ENCODE measurements at regions of chr4 and their contacts with region 1.

Region 1: DNA sequence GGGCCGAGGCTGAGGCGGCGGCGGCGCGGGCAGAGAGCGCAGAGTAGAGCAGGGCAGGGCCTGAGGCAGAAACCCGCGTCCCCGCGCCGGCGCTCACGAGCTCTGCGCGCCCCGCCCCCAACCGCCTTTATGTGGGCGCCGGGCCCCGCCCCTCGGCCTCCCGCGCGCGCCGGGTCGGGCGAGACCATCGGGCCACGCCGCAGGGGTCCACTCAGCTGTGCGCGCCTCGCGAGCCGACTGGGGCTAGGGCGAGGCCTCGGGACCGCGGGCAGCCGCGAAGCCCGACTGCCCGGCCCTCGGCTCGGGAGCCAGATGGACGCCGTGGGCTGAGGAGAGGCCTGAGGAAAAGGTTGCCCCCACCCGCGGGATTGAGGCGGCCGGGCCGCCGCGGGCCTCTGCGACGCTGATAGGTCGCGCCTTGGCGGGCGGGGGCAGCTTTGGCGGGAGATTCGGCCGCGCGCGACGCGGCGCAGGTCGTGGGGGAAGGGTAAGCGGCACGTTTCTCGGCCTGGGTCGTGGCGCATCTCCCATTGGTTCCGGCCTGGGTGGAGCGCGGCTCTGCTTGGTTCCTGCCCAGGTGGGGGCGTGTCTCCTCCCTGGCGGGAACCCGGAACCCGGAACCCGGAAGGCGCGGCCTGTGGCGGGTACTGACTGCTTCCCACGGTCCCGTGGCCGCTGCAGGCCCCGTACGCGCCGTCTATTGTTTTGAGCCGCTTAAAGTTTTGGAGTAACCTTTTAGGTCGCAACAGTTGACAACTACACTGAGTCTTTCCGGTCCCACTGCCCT is at the start of gene SLBP:
- DNase-seq: peak; percentile 98
- H3K4me3 ChIP-seq: peak within 1 kb of the TSS; percentile 76 to 98 (median 83)
- H3K27ac ChIP-seq: peak within 1 kb of the TSS; percentile 97 to 100 (median 99)
- H3K4me1 ChIP-seq: peaks cover 0 to 52% (median 37%) of the 10 kb centered on the region in 4 donors
- H3K27me3 ChIP-seq: no peaks in the 10 kb centered on the region
- CTCF ChIP-seq: no peak
- EP300 ChIP-seq: peak in 1 of 4 donors; percentile 42
- POLR2A ChIP-seq: no peak
- total RNA-seq, gene SLBP: 32.3 to 48.9 (median 40.2) TPM

Region 2: GRCh38 chr4:1644891-1645657 is 67.3 kb before region 1 on chr4:
- intact Hi-C with region 1: no loop called
- DNase-seq: peak; percentile 95
- H3K4me3 ChIP-seq: peak overlapping the region in 2 of 4 donors; percentile 7 to 18
- H3K27ac ChIP-seq: peak overlapping the region in 3 of 4 donors; percentile 82 to 90 (median 88)
- H3K4me1 ChIP-seq: peaks cover 6 to 23% (median 17%) of the 10 kb centered on the region in 4 donors
- H3K27me3 ChIP-seq: no peaks in the 10 kb centered on the region
- CTCF ChIP-seq: no peak
- EP300 ChIP-seq: peak; percentile 44 to 62 (median 52)
- POLR2A ChIP-seq: no peak

Region 3: DNA sequence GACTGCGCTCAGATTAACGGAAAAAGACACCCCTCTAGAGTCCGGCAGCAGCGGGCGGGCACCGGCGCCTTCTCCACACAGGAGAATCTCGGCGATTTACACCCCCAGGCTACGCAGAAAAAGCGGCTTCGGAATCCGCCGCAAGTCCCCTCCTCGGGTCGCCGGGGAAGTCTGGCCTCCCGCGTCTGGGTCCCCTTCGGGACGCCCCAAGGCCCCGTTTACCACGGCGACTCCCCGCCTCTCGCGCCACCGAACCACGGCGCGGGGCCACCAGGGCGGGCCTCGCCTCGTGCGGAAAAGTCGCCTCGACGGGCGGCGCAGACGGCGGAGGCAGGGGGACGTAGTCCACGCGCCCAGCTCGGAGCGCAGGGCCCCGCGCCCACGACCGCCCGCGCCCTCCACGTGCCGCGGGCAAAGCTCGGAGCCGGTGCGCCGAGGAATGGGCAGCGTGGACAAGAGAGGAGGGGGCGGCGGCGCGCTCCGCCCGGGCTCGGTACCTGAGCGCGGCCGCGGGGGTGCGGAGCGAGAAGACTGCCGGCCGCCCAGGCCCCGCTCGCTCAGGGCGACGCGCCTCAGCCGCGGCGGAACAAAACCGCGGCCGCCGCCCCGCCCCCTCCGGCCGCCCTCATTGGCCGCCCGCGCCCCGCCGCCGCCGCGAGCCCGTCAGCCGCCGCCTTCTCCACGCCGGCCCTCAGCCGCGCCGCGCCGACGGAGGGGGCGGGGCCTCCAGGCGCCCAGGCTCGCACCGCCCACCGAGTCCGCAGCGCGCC is 28.5 kb before region 1 on chr4 and contains the start of gene FAM53A:
- intact Hi-C with region 1: loop called (anchors 2 kb)
- DNase-seq: peak; percentile 74
- H3K4me3 ChIP-seq: peak within 1 kb of the TSS; percentile 36 to 78 (median 63)
- H3K27ac ChIP-seq: peak within 1 kb of the TSS; percentile 89 to 95 (median 90)
- H3K4me1 ChIP-seq: peaks cover 0 to 20% (median 11%) of the 10 kb centered on the region in 4 donors
- H3K27me3 ChIP-seq: no peaks in the 10 kb centered on the region
- CTCF ChIP-seq: no peak
- EP300 ChIP-seq: no peak
- POLR2A ChIP-seq: no peak
- total RNA-seq, gene FAM53A: 0.82 to 4.1 (median 1.7) TPM

Region 4: GRCh38 chr4:1856042-1856788 is 143.8 kb after region 1 on chr4 and contains the start of gene LETM1:
- intact Hi-C with region 1: loop called (anchors 5 kb)
- DNase-seq: peak; percentile 98
- H3K4me3 ChIP-seq: peak within 1 kb of the TSS; percentile 70 to 90 (median 76)
- H3K27ac ChIP-seq: peak within 1 kb of the TSS; percentile 83 to 87 (median 86)
- H3K4me1 ChIP-seq: peaks cover 0 to 34% (median 29%) of the 10 kb centered on the region in 4 donors
- H3K27me3 ChIP-seq: no peaks in the 10 kb centered on the region
- CTCF ChIP-seq: peak in 1 of 4 experiments; percentile 0
- EP300 ChIP-seq: no peak
- POLR2A ChIP-seq: peak; percentile 34 to 41
- total RNA-seq, gene LETM1: 15.0 to 22.4 (median 17.8) TPM

Region 5: DNA sequence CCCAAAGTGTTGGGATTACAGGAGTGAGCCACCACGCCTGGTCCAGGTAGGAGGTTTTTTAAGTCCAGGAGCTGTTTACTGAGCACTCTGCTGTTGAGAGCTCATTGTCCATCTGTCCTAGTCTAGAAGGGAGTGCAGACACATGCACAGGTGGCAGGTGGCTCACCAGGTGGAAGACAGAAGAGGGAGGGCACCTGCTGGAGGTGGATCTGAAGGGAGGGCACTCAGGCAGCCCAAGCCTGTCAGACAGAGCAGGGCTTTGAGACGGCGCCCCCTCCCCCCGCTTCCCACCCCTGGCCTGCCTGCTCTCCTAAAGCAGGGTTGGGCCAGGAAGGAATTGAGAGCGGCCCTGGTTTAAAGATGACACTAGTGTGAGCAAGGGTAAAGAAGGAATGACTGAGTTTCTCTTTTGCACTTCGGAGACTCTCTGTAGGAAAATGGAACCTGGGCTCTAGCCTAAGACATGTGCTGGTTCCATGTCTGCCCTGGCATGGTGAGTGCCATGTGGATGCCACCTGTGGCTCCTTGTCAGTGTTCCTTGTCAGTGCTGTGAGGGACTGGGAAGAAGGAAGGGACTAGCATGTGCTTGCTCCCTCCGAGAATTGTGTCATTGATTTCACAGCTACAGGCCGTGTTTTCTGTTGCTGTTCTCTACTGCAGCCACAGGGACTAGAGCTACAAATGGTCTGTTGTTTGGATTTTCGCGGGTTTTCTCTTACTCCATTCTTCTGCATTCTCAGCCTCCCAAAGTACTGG is 935.2 kb after region 1 on chr4:
- intact Hi-C with region 1: no loop called
- DNase-seq: peak; percentile 27
- H3K4me3 ChIP-seq: no peak overlapping the region
- H3K27ac ChIP-seq: no peak overlapping the region
- H3K4me1 ChIP-seq: no peaks in the 10 kb centered on the region
- H3K27me3 ChIP-seq: no peaks in the 10 kb centered on the region
- CTCF ChIP-seq: no peak
- EP300 ChIP-seq: no peak
- POLR2A ChIP-seq: no peak